Activated CD8-positive, alpha-beta T cell treated with anti-CD3 and anti-CD28 coated beads, Interleukin-2, amount 10 ng/mL, durations not matched to agents 7 days and 5 days (primary cell): ENCODE measurements at regions of chr6 and their contacts with region 1.

Region 1: DNA sequence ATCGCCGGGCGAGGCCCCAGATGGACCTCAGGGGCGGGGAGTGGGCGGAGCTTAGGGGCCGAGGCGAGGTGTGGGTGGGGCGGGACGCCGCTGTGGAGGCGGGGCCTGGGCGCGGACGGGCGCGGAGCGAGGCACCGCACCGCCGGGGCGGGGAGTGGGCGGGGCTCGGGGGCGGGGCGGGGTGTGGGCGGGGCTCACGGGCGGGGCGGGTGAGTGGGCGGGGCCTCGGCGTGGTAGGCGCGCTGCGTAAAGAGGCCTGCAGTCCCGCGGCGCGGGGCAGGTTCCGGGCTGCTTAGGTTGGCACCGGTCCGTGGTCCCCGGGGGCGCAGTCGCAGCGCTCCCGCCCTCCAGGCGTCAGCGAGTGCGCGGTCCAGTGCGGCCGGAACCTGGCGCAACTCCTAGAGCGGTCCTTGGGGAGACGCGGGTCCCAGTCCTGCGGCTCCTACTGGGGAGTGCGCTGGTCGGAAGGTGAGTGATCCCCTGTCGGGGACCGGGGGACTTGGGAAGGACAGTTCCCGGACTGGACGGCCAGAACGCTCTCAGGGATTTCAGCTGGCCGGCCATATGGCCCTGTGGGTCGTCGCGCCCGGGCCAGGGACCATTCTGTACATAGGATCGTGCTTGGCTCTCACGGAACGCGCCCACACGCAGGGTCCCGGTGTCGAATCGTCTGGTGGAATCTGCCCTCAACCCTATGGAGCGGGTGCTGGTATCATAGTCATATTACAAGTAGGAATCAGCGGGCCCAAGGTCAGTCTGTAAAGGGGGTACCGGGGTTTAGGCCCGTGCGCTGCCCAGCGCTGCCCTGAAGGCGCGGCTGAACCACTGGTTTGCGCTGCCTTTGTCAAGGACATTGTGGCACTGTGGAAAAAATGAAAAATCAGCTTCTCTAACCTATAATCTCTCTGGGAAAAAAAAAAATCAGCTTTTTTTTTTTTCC is at the start of gene NQO2:
- DNase-seq: peak; percentile 93
- ATAC-seq: peak; percentile 89
- H3K4me3 Mint-ChIP-seq: peak within 1 kb of the TSS; percentile 86
- H3K27ac Mint-ChIP-seq: peak within 1 kb of the TSS; percentile 83
- H3K4me1 Mint-ChIP-seq: peaks cover 35% of the 10 kb centered on the region
- H3K27me3 Mint-ChIP-seq: no peaks in the 10 kb centered on the region
- total RNA-seq, gene NQO2: 21.2 to 21.4 TPM

Region 2: DNA sequence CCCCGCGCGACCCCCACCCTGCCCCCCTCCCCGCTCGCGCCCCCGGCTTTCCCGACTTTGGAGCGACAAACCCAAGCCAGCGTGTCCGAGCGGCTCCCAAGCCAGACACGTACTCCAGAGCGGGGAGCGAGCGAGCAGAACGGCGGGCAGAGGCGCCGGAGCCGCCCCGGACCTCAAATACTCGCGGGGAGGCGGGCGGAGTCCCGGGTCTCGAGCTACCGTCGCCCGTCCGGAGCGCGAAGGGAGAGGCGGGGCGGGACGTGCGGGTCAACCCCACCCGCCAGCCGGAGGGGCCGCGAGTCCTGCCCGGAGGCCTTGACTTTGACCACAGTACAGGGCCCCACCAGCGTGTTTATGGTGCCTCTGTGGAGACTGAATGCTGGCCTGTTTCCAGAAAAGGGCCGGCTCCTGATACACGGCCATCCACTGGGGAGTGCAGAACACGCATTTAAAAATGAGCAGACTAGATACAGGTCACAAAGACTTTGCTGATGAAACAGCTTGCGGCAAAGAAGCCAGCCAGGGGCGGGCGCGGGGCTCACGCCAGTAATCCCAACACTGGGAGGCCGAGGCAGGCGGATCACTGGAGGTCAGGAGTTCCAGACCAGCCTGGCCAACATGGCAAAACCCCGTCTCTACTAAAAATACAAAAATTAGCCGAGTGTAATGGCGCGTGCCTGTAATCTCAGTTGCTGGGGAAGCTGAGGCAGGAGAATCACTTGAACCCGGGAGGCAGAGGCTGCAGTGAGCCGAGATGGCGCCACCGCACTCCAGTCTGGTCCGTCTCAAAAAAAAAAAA is 28.3 kb before region 1 on chr6 and contains the start of gene SERPINB6:
- CTCF ChIA-PET with region 1: no interaction called
- POLR2A ChIA-PET with region 1: no interaction called
- DNase-seq: peak; percentile 51
- ATAC-seq: peak; percentile 76
- H3K4me3 Mint-ChIP-seq: peak within 1 kb of the TSS; percentile 86
- H3K27ac Mint-ChIP-seq: peak within 1 kb of the TSS; percentile 84
- H3K4me1 Mint-ChIP-seq: peaks cover 36% of the 10 kb centered on the region
- H3K27me3 Mint-ChIP-seq: peaks cover 2% of the 10 kb centered on the region
- total RNA-seq, gene SERPINB6: 51.0 to 52.8 TPM

Region 3: GRCh38 chr6:3052481-3053230 is 52.8 kb after region 1 on chr6:
- CTCF ChIA-PET with region 1: interaction called, 13 read pairs
- POLR2A ChIA-PET with region 1: interaction called, 15 read pairs
- DNase-seq: no peak
- ATAC-seq: no peak
- H3K4me3 Mint-ChIP-seq: peak overlapping the region; percentile 75
- H3K27ac Mint-ChIP-seq: peak overlapping the region; percentile 72
- H3K4me1 Mint-ChIP-seq: peaks cover 31% of the 10 kb centered on the region
- H3K27me3 Mint-ChIP-seq: peaks cover 17% of the 10 kb centered on the region

Region 4: GRCh38 chr6:3068329-3069214 is 68.7 kb after region 1 on chr6 and contains the start of gene RIPK1:
- CTCF ChIA-PET with region 1: interaction called, 19 read pairs
- POLR2A ChIA-PET with region 1: interaction called, 7 read pairs
- DNase-seq: peak; percentile 95
- ATAC-seq: peak; percentile 82
- H3K4me3 Mint-ChIP-seq: peak within 1 kb of the TSS; percentile 96
- H3K27ac Mint-ChIP-seq: peak within 1 kb of the TSS; percentile 97
- H3K4me1 Mint-ChIP-seq: peaks cover 67% of the 10 kb centered on the region
- H3K27me3 Mint-ChIP-seq: no peaks in the 10 kb centered on the region
- total RNA-seq, gene RIPK1: 28.0 to 28.1 TPM